PC-3 (cell line): ENCODE measurements at regions of chr9 and their contacts with region 1.

Region 1: GRCh38 chr9:78314953-78315870 is 18.3 kb downstream of the PSAT1 start:
- DNase-seq: no peak
- ATAC-seq: no peak
- H3K4me3 ChIP-seq: no peak overlapping the region
- H3K27ac ChIP-seq: no peak overlapping the region
- H3K4me1 ChIP-seq: peaks cover 6% of the 10 kb centered on the region
- H3K27me3 ChIP-seq: no peaks in the 10 kb centered on the region
- CTCF ChIP-seq: no peak

Region 2: DNA sequence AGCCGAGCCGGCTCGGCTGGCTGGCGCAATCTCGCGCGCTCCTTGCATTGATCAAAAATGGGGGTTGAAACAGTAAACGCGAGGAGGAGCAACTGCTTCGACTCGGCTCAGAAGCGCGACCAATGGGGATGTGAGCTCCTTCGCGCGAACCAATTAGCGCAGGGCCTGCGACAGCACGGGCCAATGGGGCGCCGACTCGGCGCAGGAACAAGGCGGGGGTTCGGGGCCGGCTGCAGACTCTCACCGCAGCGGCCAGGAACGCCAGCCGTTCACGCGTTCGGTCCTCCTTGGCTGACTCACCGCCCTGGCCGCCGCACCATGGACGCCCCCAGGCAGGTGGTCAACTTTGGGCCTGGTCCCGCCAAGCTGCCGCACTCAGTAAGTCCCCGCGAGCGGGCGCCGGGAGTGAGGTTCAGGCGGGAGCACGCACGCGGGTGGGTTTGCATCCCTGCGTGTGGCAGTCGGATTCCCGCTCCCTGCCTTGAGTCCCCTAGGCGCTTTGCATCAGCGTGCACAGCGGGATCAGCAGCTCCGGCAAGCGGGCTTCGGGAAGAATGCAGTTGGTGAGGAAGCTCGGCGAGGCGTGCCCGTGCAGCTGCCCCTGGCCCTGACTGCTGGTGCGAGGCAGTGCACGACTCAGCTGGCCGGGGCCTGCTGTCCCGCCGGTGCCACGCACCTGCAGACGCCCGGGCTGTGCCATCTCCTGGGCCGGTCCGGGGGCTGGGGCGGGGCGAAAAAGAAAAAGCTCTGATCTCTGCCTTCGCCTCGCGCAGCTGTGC is 18.1 kb before region 1 on chr9 and contains the start of gene PSAT1:
- CTCF ChIA-PET with region 1: no interaction called
- POLR2A ChIA-PET with region 1: interaction called, 3 read pairs
- intact Hi-C with region 1: loop called (anchors 1 kb)
- DNase-seq: peak; percentile 94
- ATAC-seq: peak; percentile 93
- H3K4me3 ChIP-seq: peak within 1 kb of the TSS; percentile 95
- H3K27ac ChIP-seq: peak within 1 kb of the TSS; percentile 67
- H3K4me1 ChIP-seq: peaks cover 10% of the 10 kb centered on the region
- H3K27me3 ChIP-seq: no peaks in the 10 kb centered on the region
- CTCF ChIP-seq: no peak
- total RNA-seq, gene PSAT1: 45.6 and 52.5 TPM in 2 replicates

Region 3: GRCh38 chr9:78351816-78352215 is 36.6 kb after region 1 on chr9:
- CTCF ChIA-PET with region 1: no interaction called
- POLR2A ChIA-PET with region 1: no interaction called
- intact Hi-C with region 1: loop called (anchors 5 kb)
- DNase-seq: no peak
- ATAC-seq: no peak
- H3K4me3 ChIP-seq: no peak overlapping the region
- H3K27ac ChIP-seq: no peak overlapping the region
- H3K4me1 ChIP-seq: no peaks in the 10 kb centered on the region; the same call in 1 of the 2 replicates
- H3K27me3 ChIP-seq: no peaks in the 10 kb centered on the region
- CTCF ChIP-seq: no peak